Adrenal gland (tissue), 19 donors: ENCODE measurements at regions of chr6 and their contacts with region 1.

Region 1: GRCh38 chr6:27392481-27393022 is 4.0 kb downstream of the ZNF391 start:
- DNase-seq: no peak
- H3K4me3 ChIP-seq: no peak overlapping the region
- H3K27ac ChIP-seq: no peak overlapping the region
- H3K4me1 ChIP-seq: peaks cover 0 to 12% of the 10 kb centered on the region in 2 donors
- H3K27me3 ChIP-seq: no peaks in the 10 kb centered on the region
- CTCF ChIP-seq: no peak
- POLR2A ChIP-seq: no peak

Region 2: DNA sequence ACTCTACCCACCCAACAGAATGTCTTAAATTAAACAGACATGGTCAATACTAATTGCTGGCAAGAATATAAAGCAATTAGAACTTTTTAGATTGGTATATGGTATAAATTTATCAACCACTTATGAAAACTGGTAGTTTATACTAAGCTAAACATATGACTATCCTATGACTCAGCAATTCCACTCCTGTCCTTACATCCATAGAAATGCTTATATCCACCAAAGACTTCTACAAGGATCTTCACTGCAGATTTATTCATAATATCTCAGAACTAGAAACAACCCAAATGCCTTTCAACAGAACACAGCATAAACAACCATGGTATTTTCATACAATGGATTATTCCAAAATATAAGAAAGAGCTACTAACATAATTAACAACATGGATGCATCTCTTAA is 75.8 kb after region 1 on chr6:
- intact Hi-C with region 1: loop called in 1 of 2 experiments (anchors 5 kb)
- DNase-seq: no peak
- H3K4me3 ChIP-seq: no peak overlapping the region
- H3K27ac ChIP-seq: no peak overlapping the region
- H3K4me1 ChIP-seq: peaks cover 7 to 11% of the 10 kb centered on the region in 2 donors
- H3K27me3 ChIP-seq: no peaks in the 10 kb centered on the region
- CTCF ChIP-seq: no peak
- POLR2A ChIP-seq: no peak

Region 3: DNA sequence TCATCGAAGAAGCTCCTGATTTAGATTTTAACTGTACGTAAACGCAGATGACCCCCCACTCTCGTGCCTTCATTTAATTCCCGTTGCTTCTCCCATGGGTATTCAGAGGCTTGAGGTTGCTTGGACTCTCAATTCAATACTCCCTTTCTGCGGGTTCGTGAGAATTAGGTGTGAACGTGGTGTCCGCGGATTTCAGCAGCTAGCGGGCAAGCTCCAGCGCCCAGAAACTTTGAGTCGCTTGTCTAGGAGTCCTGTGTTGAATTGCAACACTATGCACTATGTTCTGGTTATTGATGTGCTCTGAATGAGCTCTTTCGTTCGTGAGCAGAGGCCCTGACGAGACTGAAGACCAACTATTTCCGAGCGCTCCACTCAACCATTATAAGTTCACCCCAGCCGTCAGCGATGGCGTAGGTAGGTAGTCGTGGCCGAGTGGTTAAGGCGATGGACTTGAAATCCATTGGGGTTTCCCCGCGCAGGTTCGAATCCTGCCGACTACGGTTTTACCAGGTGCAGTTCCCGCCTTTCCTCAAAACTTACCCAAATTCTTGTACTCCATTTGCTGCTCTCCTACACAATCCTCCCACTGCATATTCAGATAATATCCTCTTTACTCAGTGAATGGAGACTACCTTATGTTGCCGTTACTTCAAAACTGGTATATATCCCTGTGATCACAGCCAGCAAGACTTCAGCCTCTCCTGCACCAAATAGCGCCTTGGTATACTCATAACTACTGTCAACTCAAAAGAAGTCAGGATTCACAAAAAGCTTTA is 152.9 kb after region 1 on chr6:
- intact Hi-C with region 1: no loop called
- DNase-seq: no peak
- H3K4me3 ChIP-seq: no peak overlapping the region
- H3K27ac ChIP-seq: no peak overlapping the region
- H3K4me1 ChIP-seq: no peaks in the 10 kb centered on the region
- H3K27me3 ChIP-seq: peaks cover 75% of the 10 kb centered on the region
- CTCF ChIP-seq: no peak
- POLR2A ChIP-seq: no peak